ENCODE measurements at regions of chr11 and their contacts with region 1.

Region 1: DNA sequence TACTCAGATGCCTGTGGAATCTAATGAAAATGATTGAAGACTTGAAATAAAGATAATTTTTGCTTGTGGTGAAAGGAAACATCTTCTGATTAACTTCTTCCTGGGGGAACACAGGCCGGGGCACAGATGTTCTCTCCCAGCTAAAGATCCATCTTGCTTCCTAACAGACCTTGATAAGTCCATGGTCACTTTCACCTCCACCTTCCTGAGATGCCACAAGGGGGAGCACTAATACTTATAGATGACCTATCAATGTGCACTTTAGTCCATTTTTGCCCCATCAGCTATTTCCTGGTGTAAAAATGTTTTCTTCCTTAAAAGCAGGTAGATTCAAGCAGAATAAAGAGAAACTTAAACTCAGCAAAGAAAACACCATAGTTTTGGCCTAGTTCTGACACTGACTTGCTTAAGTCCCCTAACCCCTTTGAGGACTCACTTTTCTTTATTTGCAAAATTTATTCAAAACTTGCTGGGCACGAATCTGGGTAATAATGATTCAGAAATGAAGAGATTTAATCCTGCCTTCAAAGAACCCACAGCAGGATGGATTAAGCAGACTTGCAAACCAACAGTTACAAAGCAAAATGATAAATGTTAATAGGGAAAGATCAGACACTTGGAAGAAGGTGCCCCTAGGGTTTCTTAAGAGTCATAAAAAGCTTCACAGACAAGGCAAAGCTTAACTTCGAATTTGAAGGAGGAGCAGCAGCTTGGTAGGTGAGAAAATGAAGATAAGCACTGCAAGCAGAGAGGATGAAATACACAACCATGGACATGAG is 158.7 kb downstream of the RAB38 start:
- DNase-seq: peak; percentile 24
- CTCF ChIP-seq: peak; percentile 72

Region 2: GRCh38 chr11:88131764-88132470 is 115.3 kb after region 1 on chr11:
- CTCF ChIA-PET with region 1: no interaction called
- POLR2A ChIA-PET with region 1: no interaction called
- DNase-seq: no peak
- CTCF ChIP-seq: no peak

Region 3: DNA sequence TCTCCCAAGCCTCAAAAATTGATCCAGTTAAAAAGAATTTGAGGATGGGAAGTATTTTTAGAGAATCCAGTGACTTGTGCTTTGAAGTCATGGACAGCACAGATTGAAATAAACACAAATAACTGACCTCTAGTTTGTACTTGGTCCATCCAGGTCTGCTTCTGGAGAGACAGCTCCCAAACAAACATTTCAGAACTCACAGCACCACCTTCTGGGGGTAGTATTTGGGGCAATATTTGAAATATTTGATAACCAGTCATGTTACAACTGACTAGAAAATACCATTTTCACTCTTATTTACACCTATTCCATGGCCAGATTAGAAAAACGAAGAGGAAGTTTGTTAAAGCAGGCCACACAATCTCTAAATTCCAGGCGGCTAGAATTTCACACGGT is 264.7 kb after region 1 on chr11:
- CTCF ChIA-PET with region 1: interaction called, 11 read pairs
- POLR2A ChIA-PET with region 1: no interaction called
- DNase-seq: no peak
- CTCF ChIP-seq: no peak

Region 4: GRCh38 chr11:88535916-88536547 is 519.5 kb after region 1 on chr11:
- CTCF ChIA-PET with region 1: interaction called, 86 read pairs
- POLR2A ChIA-PET with region 1: no interaction called
- DNase-seq: peak; percentile 24
- CTCF ChIP-seq: no peak

Region 5: GRCh38 chr11:88543902-88544655 is 527.5 kb after region 1 on chr11:
- CTCF ChIA-PET with region 1: interaction called, 86 read pairs
- POLR2A ChIA-PET with region 1: no interaction called
- DNase-seq: peak; percentile 61
- CTCF ChIP-seq: peak; percentile 93

Region 6: GRCh38 chr11:88552377-88553062 is 535.9 kb after region 1 on chr11:
- CTCF ChIA-PET with region 1: interaction called, 76 read pairs
- POLR2A ChIA-PET with region 1: no interaction called
- DNase-seq: peak; percentile 38
- CTCF ChIP-seq: peak; percentile 89

Measured in GM10248 (cell line).